Activated naive CD4-positive, alpha-beta T cell treated with anti-CD3 and anti-CD28 coated beads for 36 hours (primary cell): ENCODE measurements at regions of chr10 and their contacts with region 1.

Region 1: GRCh38 chr10:119542988-119543813 is 682 bp upstream of the RGS10 start:
- DNase-seq: peak; percentile 83
- H3K4me3 Mint-ChIP-seq: peak overlapping the region; percentile 84
- H3K27ac Mint-ChIP-seq: peak overlapping the region; percentile 88
- H3K4me1 Mint-ChIP-seq: peaks cover 25% of the 10 kb centered on the region
- H3K27me3 Mint-ChIP-seq: no peaks in the 10 kb centered on the region

Region 2: GRCh38 chr10:119383174-119383856 is 159.9 kb before region 1 on chr10:
- CTCF ChIA-PET with region 1: no interaction called
- intact Hi-C with region 1: no loop called
- DNase-seq: no peak
- H3K4me3 Mint-ChIP-seq: no peak overlapping the region
- H3K27ac Mint-ChIP-seq: no peak overlapping the region
- H3K4me1 Mint-ChIP-seq: peaks cover 4% of the 10 kb centered on the region
- H3K27me3 Mint-ChIP-seq: no peaks in the 10 kb centered on the region

Region 3: GRCh38 chr10:119445311-119445934 is 97.8 kb before region 1 on chr10:
- CTCF ChIA-PET with region 1: interaction called, 6 read pairs
- intact Hi-C with region 1: loop called (anchors 1 kb)
- DNase-seq: peak; percentile 92
- H3K4me3 Mint-ChIP-seq: no peak overlapping the region
- H3K27ac Mint-ChIP-seq: no peak overlapping the region
- H3K4me1 Mint-ChIP-seq: peaks cover 9% of the 10 kb centered on the region
- H3K27me3 Mint-ChIP-seq: no peaks in the 10 kb centered on the region

Region 4: DNA sequence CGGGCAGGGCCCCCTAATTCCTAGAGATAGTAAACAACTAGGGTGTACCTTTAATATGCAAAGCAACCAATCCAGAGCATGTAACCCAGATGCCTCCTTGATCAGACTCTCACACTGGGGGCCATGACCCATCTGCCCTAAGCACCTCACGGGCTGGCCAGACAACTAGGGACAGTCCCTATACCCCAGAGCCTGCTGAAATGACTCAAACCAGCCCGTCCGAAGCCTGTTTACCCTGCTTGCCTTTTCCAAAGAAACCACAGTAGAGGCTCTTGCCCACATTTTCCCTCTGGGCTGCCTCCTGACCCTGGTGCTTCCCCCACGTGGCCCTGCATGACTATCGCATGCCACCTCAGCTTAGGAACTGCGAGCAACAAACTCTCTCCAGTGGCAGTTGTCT is 46.9 kb before region 1 on chr10:
- CTCF ChIA-PET with region 1: interaction called, 13 read pairs
- intact Hi-C with region 1: no loop called
- DNase-seq: peak; percentile 79
- H3K4me3 Mint-ChIP-seq: no peak overlapping the region
- H3K27ac Mint-ChIP-seq: peak overlapping the region; percentile 62
- H3K4me1 Mint-ChIP-seq: peaks cover 85% of the 10 kb centered on the region
- H3K27me3 Mint-ChIP-seq: no peaks in the 10 kb centered on the region

Region 5: DNA sequence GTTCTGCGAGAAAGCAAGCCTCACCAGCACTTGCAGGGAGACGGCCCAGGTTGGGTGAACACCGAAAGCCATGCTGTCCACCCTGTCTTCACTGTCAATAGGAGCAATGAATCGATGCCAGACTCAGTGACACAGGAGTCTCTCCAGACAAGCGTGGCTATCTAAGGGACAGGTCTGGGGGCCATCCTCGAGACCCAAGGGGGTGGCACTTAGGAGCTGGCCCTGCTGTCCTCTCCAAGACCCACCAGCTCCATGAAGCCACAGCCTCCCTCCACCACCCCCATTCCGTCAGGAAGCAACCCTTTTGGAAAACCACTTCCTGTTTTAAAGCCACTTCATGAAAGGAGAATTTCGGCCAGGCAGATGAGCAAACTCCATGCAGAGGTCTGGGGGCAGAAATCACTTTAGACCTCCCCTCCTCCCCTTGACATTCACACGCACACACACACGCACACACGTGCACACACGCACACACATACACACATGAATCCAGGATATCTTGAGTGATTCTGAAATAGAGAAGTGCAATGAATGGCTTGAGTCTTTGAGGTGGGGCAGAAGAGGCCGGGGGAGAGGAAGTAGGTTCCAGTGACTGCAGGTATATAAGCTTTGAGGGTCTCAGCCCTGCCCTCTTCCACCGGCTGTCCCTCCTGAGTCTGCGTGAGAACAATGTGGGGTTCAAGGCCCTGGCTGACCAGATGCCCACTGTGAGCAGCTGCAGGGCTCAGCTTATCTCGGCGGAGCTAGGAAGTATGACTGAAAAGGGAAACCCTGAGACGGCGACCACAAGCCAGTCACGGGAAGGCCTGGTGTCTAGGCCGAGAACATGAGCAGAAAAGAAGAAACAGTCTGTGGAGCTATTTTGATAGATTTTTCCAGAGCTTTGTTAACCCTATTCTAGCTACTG is 25.7 kb before region 1 on chr10:
- CTCF ChIA-PET with region 1: interaction called, 30 read pairs
- intact Hi-C with region 1: loop called (anchors 1 kb)
- DNase-seq: peak; percentile 83
- H3K4me3 Mint-ChIP-seq: peak overlapping the region; percentile 43
- H3K27ac Mint-ChIP-seq: peak overlapping the region; percentile 90
- H3K4me1 Mint-ChIP-seq: peaks cover 70% of the 10 kb centered on the region
- H3K27me3 Mint-ChIP-seq: no peaks in the 10 kb centered on the region

Region 6: GRCh38 chr10:119650692-119651513 is 107.7 kb after region 1 on chr10 and contains the start of gene BAG3:
- CTCF ChIA-PET with region 1: no interaction called
- intact Hi-C with region 1: loop called (anchors 2 kb)
- DNase-seq: peak; percentile 82
- H3K4me3 Mint-ChIP-seq: peak within 1 kb of the TSS; percentile 97
- H3K27ac Mint-ChIP-seq: peak within 1 kb of the TSS; percentile 95
- H3K4me1 Mint-ChIP-seq: peaks cover 38% of the 10 kb centered on the region
- H3K27me3 Mint-ChIP-seq: no peaks in the 10 kb centered on the region
- total RNA-seq, gene BAG3: 20.9 to 24.3 TPM

Region 7: GRCh38 chr10:119872860-119873681 is 329.9 kb after region 1 on chr10:
- CTCF ChIA-PET with region 1: no interaction called
- intact Hi-C with region 1: loop called (anchors 1 kb)
- DNase-seq: peak; percentile 84
- H3K4me3 Mint-ChIP-seq: peak overlapping the region; percentile 83
- H3K27ac Mint-ChIP-seq: peak overlapping the region; percentile 84
- H3K4me1 Mint-ChIP-seq: peaks cover 38% of the 10 kb centered on the region
- H3K27me3 Mint-ChIP-seq: no peaks in the 10 kb centered on the region

Region 8: DNA sequence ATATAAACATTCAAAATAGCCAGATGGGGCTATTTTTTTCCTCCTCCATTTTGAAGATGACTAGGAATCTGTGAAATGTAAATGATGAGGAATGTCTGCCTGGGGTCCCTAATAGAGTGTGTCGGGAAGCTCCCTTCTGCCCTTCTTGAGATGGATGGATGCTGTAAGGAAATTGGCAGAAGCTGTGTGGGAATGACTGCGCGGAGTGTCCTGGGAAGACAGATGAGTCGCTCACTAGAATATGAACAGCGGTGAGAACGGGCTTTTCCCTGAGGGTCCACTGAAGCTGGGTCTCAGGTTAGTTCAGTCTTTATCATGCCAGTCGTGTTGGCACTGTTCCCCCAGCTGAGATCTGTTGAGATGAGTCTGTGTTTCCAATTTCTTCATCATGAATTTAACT is 838.7 kb after region 1 on chr10:
- CTCF ChIA-PET with region 1: no interaction called
- intact Hi-C with region 1: no loop called
- DNase-seq: no peak
- H3K4me3 Mint-ChIP-seq: no peak overlapping the region
- H3K27ac Mint-ChIP-seq: no peak overlapping the region
- H3K4me1 Mint-ChIP-seq: no peaks in the 10 kb centered on the region
- H3K27me3 Mint-ChIP-seq: no peaks in the 10 kb centered on the region